Activated CD4-positive, alpha-beta T cell treated with anti-CD3 and anti-CD28 coated beads for 36 hours (primary cell): ENCODE measurements at regions of chr2 and their contacts with region 1.

Region 1: DNA sequence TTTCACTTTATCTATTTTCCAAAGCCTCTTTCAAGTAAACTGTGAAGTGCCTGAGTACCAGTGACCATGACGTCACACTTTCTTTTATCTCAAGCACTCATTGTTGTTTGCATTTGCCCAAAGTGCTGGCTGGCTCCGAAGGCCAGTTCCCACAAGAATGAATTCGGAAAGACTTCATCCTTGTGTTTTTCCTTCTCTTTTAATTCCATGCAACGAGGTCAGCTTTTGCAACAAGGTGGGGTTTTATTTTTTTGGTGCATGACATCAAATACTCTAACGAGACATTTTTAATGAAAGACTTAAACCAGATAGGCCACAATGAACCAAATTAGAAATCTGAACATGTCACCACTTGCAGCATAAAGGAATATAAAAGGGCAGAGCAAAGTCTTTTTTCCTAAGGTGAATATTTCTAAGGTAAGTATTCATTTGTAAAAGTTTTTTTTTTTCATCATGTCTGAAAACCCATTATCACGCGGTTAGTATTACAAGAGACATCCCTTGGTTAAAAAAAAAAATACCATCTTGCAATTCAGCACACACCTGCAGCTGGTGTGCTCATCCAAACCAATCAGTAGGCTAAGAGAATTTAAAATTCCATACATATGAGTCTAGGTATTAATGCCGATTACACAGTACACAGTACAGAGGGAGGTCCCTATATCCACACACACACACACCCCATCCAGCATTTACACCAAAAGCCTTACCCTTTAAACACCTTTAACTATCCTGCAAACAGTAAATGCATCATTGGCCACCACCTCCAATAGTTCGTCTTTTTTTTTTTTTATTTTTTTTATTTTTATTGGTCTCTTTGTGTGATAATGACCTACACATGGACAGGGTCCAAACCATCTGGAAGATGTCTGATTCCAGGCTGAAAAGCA is 2.3 kb downstream of the ARL4C start:
- DNase-seq: no peak
- ATAC-seq: no peak
- H3K4me3 Mint-ChIP-seq: peak overlapping the region; percentile 96
- H3K27ac Mint-ChIP-seq: peak overlapping the region; percentile 98
- H3K4me1 Mint-ChIP-seq: peaks cover 49% of the 10 kb centered on the region
- H3K27me3 Mint-ChIP-seq: no peaks in the 10 kb centered on the region

Region 2: DNA sequence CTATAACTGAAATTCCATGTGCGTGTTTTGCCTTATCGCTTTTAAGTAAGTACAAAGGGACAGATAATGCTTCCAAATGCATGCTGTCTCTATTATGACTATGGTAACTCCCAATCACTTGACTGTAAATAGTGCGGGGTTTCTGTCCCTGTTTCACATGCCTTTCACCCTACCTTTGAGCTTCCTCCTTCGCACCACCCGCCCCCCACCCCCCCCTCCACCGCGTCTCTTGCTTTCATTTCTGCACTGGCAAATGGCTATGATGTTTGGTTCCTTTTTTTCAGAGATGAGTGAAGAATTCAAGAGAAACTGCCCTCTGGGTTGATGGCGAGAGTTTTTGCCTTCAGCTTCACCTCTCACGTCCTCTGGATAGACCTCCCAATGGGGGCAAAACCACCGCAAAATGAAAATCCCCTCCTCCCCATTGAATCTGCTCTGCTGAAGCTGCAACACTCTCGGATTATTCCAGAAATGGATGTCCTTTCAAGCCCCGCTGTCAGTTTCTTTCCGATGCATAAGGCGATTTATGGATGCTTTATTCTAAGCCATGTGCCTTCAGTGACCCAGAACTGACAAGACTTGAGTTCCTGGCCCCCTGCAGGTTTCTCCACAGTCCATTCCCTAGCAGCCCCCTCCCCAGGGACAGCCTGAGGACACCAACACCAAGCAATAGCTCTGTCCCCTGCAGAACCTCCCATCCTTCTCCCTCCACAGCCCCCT is 469.0 kb before region 1 on chr2:
- CTCF ChIA-PET with region 1: no interaction called
- POLR2A ChIA-PET with region 1: no interaction called
- intact Hi-C with region 1: no loop called
- DNase-seq: no peak
- ATAC-seq: peak; percentile 90
- H3K4me3 Mint-ChIP-seq: peak overlapping the region; percentile 62
- H3K27ac Mint-ChIP-seq: peak overlapping the region; percentile 33
- H3K4me1 Mint-ChIP-seq: peaks cover 35% of the 10 kb centered on the region
- H3K27me3 Mint-ChIP-seq: peaks cover 2% of the 10 kb centered on the region

Region 3: GRCh38 chr2:234241656-234242458 is 252.7 kb before region 1 on chr2:
- CTCF ChIA-PET with region 1: no interaction called
- POLR2A ChIA-PET with region 1: no interaction called
- intact Hi-C with region 1: no loop called
- DNase-seq: no peak
- ATAC-seq: no peak
- H3K4me3 Mint-ChIP-seq: no peak overlapping the region
- H3K27ac Mint-ChIP-seq: no peak overlapping the region
- H3K4me1 Mint-ChIP-seq: peaks cover 13% of the 10 kb centered on the region
- H3K27me3 Mint-ChIP-seq: no peaks in the 10 kb centered on the region

Region 4: DNA sequence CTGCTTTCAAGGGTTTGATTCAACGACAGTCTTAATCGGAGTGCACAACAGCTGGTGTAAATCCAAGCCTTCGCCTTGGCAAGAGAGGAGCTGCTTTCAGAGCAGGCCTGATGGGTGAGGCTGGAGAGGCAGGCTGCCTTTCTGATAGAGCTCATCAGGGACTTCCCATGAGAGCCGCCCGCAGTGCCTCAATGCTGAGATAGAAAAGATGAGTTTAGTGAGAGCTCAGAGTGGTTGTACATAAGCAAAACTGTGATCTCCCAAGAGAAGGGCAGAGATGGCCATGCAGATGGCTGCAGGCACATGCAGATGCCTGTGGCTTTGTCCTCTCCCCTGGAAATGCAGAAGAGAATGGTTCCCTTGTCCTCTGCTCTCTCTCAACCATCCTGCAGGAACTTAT is 119.9 kb before region 1 on chr2:
- CTCF ChIA-PET with region 1: interaction called, 3 read pairs
- POLR2A ChIA-PET with region 1: interaction called, 4 read pairs
- intact Hi-C with region 1: loop called (anchors 2 kb)
- DNase-seq: no peak
- ATAC-seq: no peak
- H3K4me3 Mint-ChIP-seq: no peak overlapping the region
- H3K27ac Mint-ChIP-seq: no peak overlapping the region
- H3K4me1 Mint-ChIP-seq: peaks cover 68% of the 10 kb centered on the region
- H3K27me3 Mint-ChIP-seq: no peaks in the 10 kb centered on the region

Region 5: DNA sequence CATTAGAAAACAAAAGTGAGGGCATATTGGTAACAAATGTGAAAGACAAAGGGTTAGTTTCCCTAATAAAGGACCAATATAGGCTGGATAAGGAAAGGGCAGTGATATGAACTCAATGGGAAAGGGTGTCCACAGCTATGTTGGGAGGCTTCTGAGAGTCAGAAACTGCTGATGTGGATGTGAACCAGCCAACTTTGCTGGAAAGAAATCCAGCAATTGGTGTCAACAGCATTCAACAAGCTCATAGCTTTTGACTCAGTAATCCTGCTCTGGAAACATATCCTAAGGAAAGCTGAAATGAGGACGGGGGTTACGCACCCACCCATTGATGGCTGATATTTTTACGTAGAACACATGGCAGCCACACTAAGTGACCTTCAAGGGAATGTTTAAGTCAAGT is 61.4 kb before region 1 on chr2:
- CTCF ChIA-PET with region 1: no interaction called
- POLR2A ChIA-PET with region 1: no interaction called
- intact Hi-C with region 1: no loop called
- DNase-seq: no peak
- ATAC-seq: no peak
- H3K4me3 Mint-ChIP-seq: no peak overlapping the region
- H3K27ac Mint-ChIP-seq: no peak overlapping the region
- H3K4me1 Mint-ChIP-seq: peaks cover 59% of the 10 kb centered on the region
- H3K27me3 Mint-ChIP-seq: no peaks in the 10 kb centered on the region

Region 6: DNA sequence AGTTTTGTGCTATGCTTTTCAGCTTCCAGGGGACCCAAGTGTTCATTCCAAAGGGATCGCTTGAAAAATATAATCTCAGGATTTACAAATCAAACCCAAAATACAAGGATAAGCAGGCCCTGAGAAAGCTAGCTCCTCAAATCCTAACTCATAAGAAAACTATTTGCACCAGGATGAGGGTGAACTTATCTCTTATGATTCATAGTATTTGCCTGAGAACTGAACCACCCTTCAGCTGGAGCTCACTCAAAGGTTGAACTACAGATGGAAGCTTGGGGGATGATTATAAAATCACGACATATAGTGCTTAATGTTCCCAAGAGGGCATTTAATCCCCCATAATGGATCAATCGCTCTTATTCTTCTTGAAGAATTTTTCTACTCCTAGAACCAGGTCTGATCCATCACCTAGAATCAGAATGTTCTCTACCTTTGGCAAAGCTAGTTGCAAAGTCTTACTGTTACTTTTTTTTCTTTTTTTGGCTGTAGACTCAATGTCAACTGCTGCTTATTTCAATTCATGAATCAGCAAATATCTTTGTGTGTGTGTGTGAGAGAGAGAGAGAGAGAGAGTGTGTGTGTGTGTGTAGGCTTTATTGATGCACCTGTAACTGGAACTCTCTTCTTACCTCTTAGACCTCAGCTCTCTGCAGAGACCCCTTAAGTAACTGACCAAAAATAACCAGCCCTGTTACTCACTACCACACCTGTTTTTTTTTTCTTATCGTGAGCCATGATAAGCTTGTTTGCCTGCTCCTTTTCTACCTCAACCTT is 42.6 kb before region 1 on chr2:
- CTCF ChIA-PET with region 1: interaction called, 6 read pairs
- POLR2A ChIA-PET with region 1: interaction called, 8 read pairs
- intact Hi-C with region 1: loop called (anchors 1 to 2 kb)
- DNase-seq: no peak
- ATAC-seq: peak; percentile 34
- H3K4me3 Mint-ChIP-seq: peak overlapping the region; percentile 79
- H3K27ac Mint-ChIP-seq: peak overlapping the region; percentile 93
- H3K4me1 Mint-ChIP-seq: peaks cover 85% of the 10 kb centered on the region
- H3K27me3 Mint-ChIP-seq: no peaks in the 10 kb centered on the region

Region 7: DNA sequence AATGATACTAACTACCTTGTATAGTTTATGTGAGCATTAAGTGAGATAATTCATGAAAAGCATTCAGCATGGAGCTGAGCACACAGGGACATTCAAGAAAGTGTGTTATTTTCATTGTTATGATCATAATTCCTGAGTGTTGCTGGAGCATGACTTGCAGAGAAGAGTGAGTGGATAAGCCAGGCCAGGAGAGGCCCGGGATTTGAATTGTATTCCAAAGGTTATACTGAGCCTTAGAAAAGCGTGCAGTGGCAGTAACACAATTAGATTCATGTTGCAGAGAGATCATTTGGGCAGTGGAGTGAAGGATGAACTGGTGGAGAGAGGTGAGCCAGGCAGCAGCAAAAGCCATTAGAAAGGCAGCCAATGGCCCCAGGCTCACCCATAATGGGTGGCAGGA is 314.3 kb after region 1 on chr2:
- CTCF ChIA-PET with region 1: no interaction called
- POLR2A ChIA-PET with region 1: no interaction called
- intact Hi-C with region 1: no loop called
- DNase-seq: no peak
- ATAC-seq: no peak
- H3K4me3 Mint-ChIP-seq: no peak overlapping the region
- H3K27ac Mint-ChIP-seq: no peak overlapping the region
- H3K4me1 Mint-ChIP-seq: no peaks in the 10 kb centered on the region
- H3K27me3 Mint-ChIP-seq: peaks cover 15% of the 10 kb centered on the region